ENCODE measurements at regions of chr16 and their contacts with region 1.

Region 1: GRCh38 chr16:46947900-46948547 is 25.4 kb downstream of the DNAJA2 start:
- DNase-seq: peak in 8 of 14 experiments; percentile 4 to 70 (median 31)
- ATAC-seq: peak; percentile 76
- H3K4me3 ChIP-seq: no peak overlapping the region
- H3K4me3 Mint-ChIP-seq: no peak overlapping the region
- H3K27ac ChIP-seq: no peak overlapping the region
- H3K27ac Mint-ChIP-seq: no peak overlapping the region
- H3K4me1 ChIP-seq: peaks cover 12% of the 10 kb centered on the region
- H3K4me1 Mint-ChIP-seq: peaks cover 9% of the 10 kb centered on the region
- H3K27me3 ChIP-seq: no peaks in the 10 kb centered on the region
- H3K27me3 Mint-ChIP-seq: no peaks in the 10 kb centered on the region
- CTCF ChIP-seq: peak; percentile 67

Region 2: GRCh38 chr16:47018223-47018891 is 70.3 kb after region 1 on chr16:
- CTCF ChIA-PET with region 1: no interaction called
- POLR2A ChIA-PET with region 1: no interaction called
- intact Hi-C with region 1: loop called in 1 of 2 experiments (anchors 5 kb)
- DNase-seq: peak in 12 of 14 experiments; percentile 10 to 73 (median 24)
- ATAC-seq: peak; percentile 85
- H3K4me3 ChIP-seq: no peak overlapping the region
- H3K4me3 Mint-ChIP-seq: no peak overlapping the region
- H3K27ac ChIP-seq: no peak overlapping the region
- H3K27ac Mint-ChIP-seq: no peak overlapping the region
- H3K4me1 ChIP-seq: peaks cover 18% of the 10 kb centered on the region
- H3K4me1 Mint-ChIP-seq: peaks cover 18% of the 10 kb centered on the region
- H3K27me3 ChIP-seq: no peaks in the 10 kb centered on the region
- H3K27me3 Mint-ChIP-seq: no peaks in the 10 kb centered on the region
- CTCF ChIP-seq: no peak

Region 3: DNA sequence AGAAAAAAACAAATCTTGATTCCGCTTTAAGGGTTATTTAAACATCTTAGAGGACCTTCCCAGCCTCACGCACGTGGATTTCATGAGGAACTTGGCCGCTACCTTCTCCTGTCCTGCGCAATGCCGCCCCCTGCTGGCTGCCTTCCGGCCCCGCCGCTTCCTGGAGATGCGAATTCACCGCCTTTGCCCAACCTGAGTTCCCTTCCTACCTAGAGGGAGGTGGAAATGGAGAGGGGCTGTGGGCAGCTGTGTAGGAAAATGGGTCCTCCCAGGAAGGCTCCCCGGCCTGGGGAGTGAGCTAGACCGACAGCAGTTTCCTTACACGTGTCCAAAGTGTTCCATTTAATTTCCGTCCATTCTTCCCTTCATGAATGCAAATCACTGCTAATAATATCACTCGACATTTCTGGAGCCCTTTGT is 1208.8 kb after region 1 on chr16:
- CTCF ChIA-PET with region 1: no interaction called
- POLR2A ChIA-PET with region 1: no interaction called
- intact Hi-C with region 1: loop called in 1 of 2 experiments (anchors 2 kb)
- DNase-seq: peak; percentile 62 to 86 (median 76)
- ATAC-seq: peak; percentile 74
- H3K4me3 ChIP-seq: no peak overlapping the region
- H3K4me3 Mint-ChIP-seq: no peak overlapping the region
- H3K27ac ChIP-seq: no peak overlapping the region
- H3K27ac Mint-ChIP-seq: no peak overlapping the region
- H3K4me1 ChIP-seq: peaks cover 7% of the 10 kb centered on the region
- H3K4me1 Mint-ChIP-seq: no peaks in the 10 kb centered on the region
- H3K27me3 ChIP-seq: peaks cover 0 to 3% of the 10 kb centered on the region in 2 experiments
- H3K27me3 Mint-ChIP-seq: peaks cover 14% of the 10 kb centered on the region
- CTCF ChIP-seq: peak; percentile 94

Region 4: GRCh38 chr16:48164907-48165726 is 1217.1 kb after region 1 on chr16:
- CTCF ChIA-PET with region 1: interaction called, 4 read pairs
- POLR2A ChIA-PET with region 1: no interaction called
- intact Hi-C with region 1: loop called (anchors 2 kb)
- DNase-seq: peak; percentile 37 to 79 (median 57)
- ATAC-seq: peak; percentile 81
- H3K4me3 ChIP-seq: no peak overlapping the region
- H3K4me3 Mint-ChIP-seq: no peak overlapping the region
- H3K27ac ChIP-seq: no peak overlapping the region
- H3K27ac Mint-ChIP-seq: no peak overlapping the region
- H3K4me1 ChIP-seq: peaks cover 5% of the 10 kb centered on the region
- H3K4me1 Mint-ChIP-seq: peaks cover 5% of the 10 kb centered on the region
- H3K27me3 ChIP-seq: no peaks in the 10 kb centered on the region
- H3K27me3 Mint-ChIP-seq: no peaks in the 10 kb centered on the region
- CTCF ChIP-seq: peak; percentile 81

Measured in CD4-positive, alpha-beta T cell (primary cell).